ENCODE measurements at regions of chr5 and their contacts with region 1.

Region 1: DNA sequence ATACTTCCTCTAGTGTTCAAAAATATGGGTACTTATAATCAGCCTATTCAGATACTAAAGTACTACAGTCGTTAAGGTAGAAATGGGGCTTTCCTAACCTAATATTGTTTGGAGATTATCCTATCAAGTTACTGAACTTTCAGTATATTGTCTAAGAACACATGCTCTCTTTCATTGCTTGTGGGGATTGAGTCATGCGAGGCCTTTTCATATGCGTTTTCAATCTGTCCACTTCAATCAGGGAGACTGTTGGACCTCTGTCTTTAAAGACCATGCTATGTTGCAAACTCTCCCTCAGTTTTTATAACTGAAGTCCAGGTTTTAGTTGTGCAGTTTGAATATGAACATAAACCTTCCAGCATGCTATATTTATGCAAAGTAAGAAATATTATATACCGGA is 15.0 kb downstream of the PRR16 start:
- DNase-seq: no peak
- ATAC-seq: peak in 2 of 4 donors; percentile 20 to 38
- H3K4me3 ChIP-seq: no peak overlapping the region
- H3K27ac ChIP-seq: no peak overlapping the region
- H3K4me1 ChIP-seq: peaks cover 0 to 23% (median 3%) of the 10 kb centered on the region in 12 donors
- H3K27me3 ChIP-seq: no peaks in the 10 kb centered on the region
- CTCF ChIP-seq: no peak
- POLR2A ChIP-seq: no peak

Region 2: GRCh38 chr5:120624021-120624563 is 145.0 kb after region 1 on chr5:
- intact Hi-C with region 1: loop called in 1 of 10 experiments (anchors 10 kb)
- DNase-seq: no peak
- ATAC-seq: no peak
- H3K4me3 ChIP-seq: no peak overlapping the region
- H3K27ac ChIP-seq: no peak overlapping the region
- H3K4me1 ChIP-seq: peaks cover 0 to 10% (median 0%) of the 10 kb centered on the region in 12 donors
- H3K27me3 ChIP-seq: no peaks in the 10 kb centered on the region
- CTCF ChIP-seq: no peak
- POLR2A ChIP-seq: no peak

Measured in heart left ventricle (tissue), 16 donors.